ENCODE measurements at regions of chr17 and their contacts with region 1.

Region 1: DNA sequence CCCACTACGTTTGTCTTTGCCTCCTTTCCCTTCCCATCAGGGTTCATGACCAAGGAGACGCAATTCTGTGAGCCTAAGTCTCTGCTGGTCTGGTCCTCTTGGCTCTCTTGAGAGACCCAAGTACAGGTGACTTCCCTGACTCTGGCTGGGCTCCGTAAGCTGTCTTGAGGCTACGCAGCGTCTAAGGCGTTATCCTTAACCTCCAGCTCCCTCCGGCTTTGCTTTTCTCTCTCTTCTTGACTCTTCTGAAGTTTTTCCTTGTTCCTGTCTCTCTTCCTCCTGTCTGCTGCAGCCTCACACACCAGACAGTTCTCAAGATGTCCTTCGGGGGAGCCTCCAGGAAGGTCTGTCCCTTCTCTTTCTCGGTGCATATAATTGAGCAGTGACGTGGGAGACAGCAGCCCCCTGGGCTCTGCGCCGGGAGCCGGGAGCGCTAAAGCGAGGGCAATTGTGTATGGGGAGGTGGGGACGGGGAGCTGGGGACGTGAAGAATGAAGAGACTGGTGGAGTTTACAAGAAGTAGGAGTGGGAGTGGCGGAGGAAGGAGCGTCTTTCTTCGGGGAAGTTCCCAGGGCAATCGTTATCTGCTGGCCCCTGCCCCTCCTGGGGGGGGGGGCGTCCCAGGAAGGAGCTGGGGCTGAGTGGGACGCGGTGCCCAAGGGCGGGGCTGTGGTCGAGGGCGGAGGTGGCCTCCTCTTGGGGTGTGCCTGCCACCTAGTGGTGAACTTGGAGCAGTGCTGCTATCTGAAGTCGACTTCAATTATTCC is 6.9 kb upstream of the PIRT start:
- DNase-seq: peak; percentile 83
- ATAC-seq: peak; percentile 98

Region 2: GRCh38 chr17:10646392-10646990 is 198.3 kb before region 1 on chr17:
- intact Hi-C with region 1: loop called (anchors 10 kb)
- DNase-seq: peak; percentile 72
- ATAC-seq: peak; percentile 79

Region 3: DNA sequence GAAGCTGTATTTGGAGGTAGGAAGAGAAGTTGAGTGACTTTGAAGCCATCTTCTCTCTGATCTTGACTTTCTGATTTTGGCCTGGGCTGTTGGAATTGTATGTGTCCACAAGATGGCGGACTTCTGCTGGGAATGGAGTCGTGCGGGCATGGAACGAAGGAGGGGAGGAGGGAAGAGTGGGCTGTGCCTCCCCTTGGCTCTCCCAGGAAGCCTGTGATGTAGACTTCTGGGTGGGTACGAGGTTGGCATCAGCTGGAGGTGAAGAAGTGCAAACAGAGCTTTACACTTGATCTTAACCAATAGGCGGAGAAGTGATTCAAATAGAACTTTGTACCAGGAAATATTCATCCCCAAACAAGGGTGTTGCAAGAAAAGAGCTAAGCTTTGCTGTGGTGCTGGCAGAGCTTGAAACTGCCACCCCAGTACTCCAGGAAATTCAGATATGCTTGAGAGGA is 107.6 kb before region 1 on chr17:
- intact Hi-C with region 1: loop called (anchors 2 kb)
- DNase-seq: peak; percentile 59
- ATAC-seq: peak; percentile 92

Region 4: DNA sequence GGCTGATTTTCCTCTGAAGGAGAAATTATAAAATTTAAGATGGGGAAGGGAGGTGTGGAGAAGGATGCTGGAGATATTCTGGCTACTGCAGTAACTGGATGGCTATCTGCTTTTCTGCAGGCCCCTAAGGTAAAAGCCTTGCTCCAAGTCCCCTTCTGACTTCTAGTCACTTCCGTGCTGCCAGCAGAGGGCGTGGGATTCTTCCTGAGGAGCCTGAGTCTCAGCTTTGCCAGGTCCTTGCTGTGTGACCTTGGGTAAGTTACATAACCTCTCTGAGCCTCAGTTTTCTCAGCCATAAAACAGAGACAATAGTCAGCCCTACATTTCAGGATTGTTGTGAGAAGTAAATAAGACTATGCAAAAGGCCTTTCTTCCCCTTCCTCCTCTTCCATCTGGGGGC is 90.7 kb before region 1 on chr17:
- intact Hi-C with region 1: no loop called
- DNase-seq: no peak
- ATAC-seq: no peak

Measured in Right ventricle myocardium superior (tissue), 1 donor.